ENCODE measurements at regions of chr7 and their contacts with region 1.

Region 1: GRCh38 chr7:106659963-106660861 is 746 bp downstream of the CCDC71L start:
- DNase-seq: peak; percentile 68 to 83
- H3K4me3 ChIP-seq: peak overlapping the region; percentile 90
- H3K4me3 Mint-ChIP-seq: peak overlapping the region; percentile 73
- H3K27ac Mint-ChIP-seq: peak overlapping the region; percentile 16
- H3K4me1 ChIP-seq: peaks cover 14% of the 10 kb centered on the region
- H3K4me1 Mint-ChIP-seq: no peaks in the 10 kb centered on the region
- H3K27me3 ChIP-seq: no peaks in the 10 kb centered on the region
- H3K27me3 Mint-ChIP-seq: peaks cover 3% of the 10 kb centered on the region
- CTCF ChIP-seq: peak; percentile 55 to 60

Region 2: GRCh38 chr7:105723572-105723971 is 936.6 kb before region 1 on chr7:
- CTCF ChIA-PET with region 1: no interaction called
- POLR2A ChIA-PET with region 1: no interaction called
- intact Hi-C with region 1: no loop called
- DNase-seq: no peak
- H3K4me3 ChIP-seq: no peak overlapping the region
- H3K4me3 Mint-ChIP-seq: no peak overlapping the region
- H3K27ac Mint-ChIP-seq: no peak overlapping the region
- H3K4me1 ChIP-seq: no peaks in the 10 kb centered on the region
- H3K4me1 Mint-ChIP-seq: peaks cover 4% of the 10 kb centered on the region
- H3K27me3 ChIP-seq: no peaks in the 10 kb centered on the region
- H3K27me3 Mint-ChIP-seq: no peaks in the 10 kb centered on the region
- CTCF ChIP-seq: no peak

Region 3: GRCh38 chr7:106542550-106543220 is 117.5 kb before region 1 on chr7:
- CTCF ChIA-PET with region 1: interaction called, 16 read pairs
- POLR2A ChIA-PET with region 1: no interaction called
- intact Hi-C with region 1: loop called (anchors 2 kb)
- DNase-seq: peak; percentile 57 to 68
- H3K4me3 ChIP-seq: no peak overlapping the region
- H3K4me3 Mint-ChIP-seq: no peak overlapping the region
- H3K27ac Mint-ChIP-seq: no peak overlapping the region
- H3K4me1 ChIP-seq: no peaks in the 10 kb centered on the region
- H3K4me1 Mint-ChIP-seq: peaks cover 7% of the 10 kb centered on the region
- H3K27me3 ChIP-seq: no peaks in the 10 kb centered on the region; the same call in 1 of the 2 replicates
- H3K27me3 Mint-ChIP-seq: peaks cover 4% of the 10 kb centered on the region
- CTCF ChIP-seq: peak; percentile 68 to 76

Region 4: GRCh38 chr7:106679153-106679931 is 19.1 kb after region 1 on chr7:
- CTCF ChIA-PET with region 1: no interaction called
- POLR2A ChIA-PET with region 1: no interaction called
- intact Hi-C with region 1: no loop called
- DNase-seq: no peak
- H3K4me3 ChIP-seq: no peak overlapping the region
- H3K4me3 Mint-ChIP-seq: no peak overlapping the region
- H3K27ac Mint-ChIP-seq: no peak overlapping the region
- H3K4me1 ChIP-seq: no peaks in the 10 kb centered on the region
- H3K4me1 Mint-ChIP-seq: no peaks in the 10 kb centered on the region
- H3K27me3 ChIP-seq: no peaks in the 10 kb centered on the region
- H3K27me3 Mint-ChIP-seq: peaks cover 4% of the 10 kb centered on the region
- CTCF ChIP-seq: no peak

Region 5: DNA sequence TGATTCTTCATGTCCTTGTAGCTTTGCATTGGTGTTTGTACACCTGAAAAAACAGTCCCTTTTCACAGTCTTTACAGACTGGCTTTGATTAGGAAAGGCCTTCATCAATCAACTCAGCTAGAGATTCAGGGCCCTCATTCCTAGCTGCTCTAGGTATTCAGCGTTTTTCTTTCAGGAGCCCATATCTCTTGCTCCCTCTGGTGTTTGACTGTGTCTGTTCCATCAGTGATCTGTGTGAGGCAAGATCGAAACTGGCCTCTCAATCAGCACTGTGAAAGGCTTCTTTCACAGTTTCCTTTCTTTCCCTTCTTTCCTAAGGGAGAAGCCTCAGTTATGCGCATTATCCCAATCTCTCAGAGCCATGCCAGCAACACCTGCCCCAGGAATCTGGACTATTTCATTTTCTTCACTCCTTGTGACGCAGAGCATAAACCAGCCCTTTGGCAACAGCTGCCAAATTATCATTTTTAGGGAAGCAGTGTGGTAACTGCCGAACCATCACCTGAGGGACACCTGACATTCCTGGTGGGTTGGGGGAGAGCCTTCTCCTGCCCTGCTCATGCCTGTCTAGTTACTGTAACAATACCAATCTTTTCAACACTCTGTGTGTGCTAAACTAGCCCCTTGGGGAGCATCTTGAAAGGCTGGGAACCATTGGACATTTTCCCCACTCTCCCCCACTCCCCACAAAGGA is 76.4 kb after region 1 on chr7:
- CTCF ChIA-PET with region 1: interaction called, 4 read pairs
- POLR2A ChIA-PET with region 1: no interaction called
- intact Hi-C with region 1: loop called (anchors 1 kb)
- DNase-seq: peak; percentile 52 to 59
- H3K4me3 ChIP-seq: no peak overlapping the region
- H3K4me3 Mint-ChIP-seq: no peak overlapping the region
- H3K27ac Mint-ChIP-seq: no peak overlapping the region
- H3K4me1 ChIP-seq: 0 out of 2 replicates have a peak, but pooled peaks cover 5% of the 10 kb centered on the region
- H3K4me1 Mint-ChIP-seq: no peaks in the 10 kb centered on the region
- H3K27me3 ChIP-seq: no peaks in the 10 kb centered on the region
- H3K27me3 Mint-ChIP-seq: no peaks in the 10 kb centered on the region
- CTCF ChIP-seq: peak; percentile 63 to 71

Region 6: DNA sequence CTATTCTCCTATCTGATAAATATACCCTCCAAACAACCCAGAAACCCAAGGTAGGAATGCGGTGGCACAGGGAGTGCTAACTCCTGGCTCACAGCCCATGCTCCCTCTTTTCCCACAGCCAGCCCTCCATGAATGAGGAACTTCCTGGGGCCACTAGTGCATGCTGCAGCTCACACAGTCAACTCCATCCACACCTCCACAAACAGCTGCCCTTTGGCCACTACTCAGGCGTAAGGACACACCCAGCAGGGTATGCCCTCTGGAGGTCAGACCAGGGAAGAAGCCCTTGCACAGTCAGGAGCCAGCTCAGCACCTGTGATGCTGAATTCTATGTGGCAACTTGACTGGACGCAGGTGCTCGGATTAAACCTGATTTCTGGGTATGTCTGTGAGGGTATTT is 119.7 kb after region 1 on chr7:
- CTCF ChIA-PET with region 1: interaction called, 3 read pairs
- POLR2A ChIA-PET with region 1: no interaction called
- intact Hi-C with region 1: loop called (anchors 1 kb)
- DNase-seq: peak; percentile 71 to 82
- H3K4me3 ChIP-seq: no peak overlapping the region
- H3K4me3 Mint-ChIP-seq: no peak overlapping the region
- H3K27ac Mint-ChIP-seq: no peak overlapping the region
- H3K4me1 ChIP-seq: peaks cover 4% of the 10 kb centered on the region; the same call in 1 of the 2 replicates
- H3K4me1 Mint-ChIP-seq: peaks cover 14% of the 10 kb centered on the region
- H3K27me3 ChIP-seq: no peaks in the 10 kb centered on the region
- H3K27me3 Mint-ChIP-seq: no peaks in the 10 kb centered on the region
- CTCF ChIP-seq: peak; percentile 40 to 77